Dorsolateral prefrontal cortex (tissue), 120 donors: ENCODE measurements at regions of chr20 and their contacts with region 1.

Region 1: GRCh38 chr20:51595058-51595532 is 52.6 kb upstream of the NFATC2 start:
- DNase-seq: peak; percentile 78 to 95 (median 89)
- H3K4me3 ChIP-seq: peak overlapping the region in 12 of 59 donors; percentile 5 to 30 (median 20)
- H3K27ac ChIP-seq: peak overlapping the region in 44 of 59 donors; percentile 1 to 75 (median 47)
- H3K27me3 ChIP-seq: no peaks in the 10 kb centered on the region
- CTCF ChIP-seq: peak; percentile 75 to 95 (median 89)

Region 2: DNA sequence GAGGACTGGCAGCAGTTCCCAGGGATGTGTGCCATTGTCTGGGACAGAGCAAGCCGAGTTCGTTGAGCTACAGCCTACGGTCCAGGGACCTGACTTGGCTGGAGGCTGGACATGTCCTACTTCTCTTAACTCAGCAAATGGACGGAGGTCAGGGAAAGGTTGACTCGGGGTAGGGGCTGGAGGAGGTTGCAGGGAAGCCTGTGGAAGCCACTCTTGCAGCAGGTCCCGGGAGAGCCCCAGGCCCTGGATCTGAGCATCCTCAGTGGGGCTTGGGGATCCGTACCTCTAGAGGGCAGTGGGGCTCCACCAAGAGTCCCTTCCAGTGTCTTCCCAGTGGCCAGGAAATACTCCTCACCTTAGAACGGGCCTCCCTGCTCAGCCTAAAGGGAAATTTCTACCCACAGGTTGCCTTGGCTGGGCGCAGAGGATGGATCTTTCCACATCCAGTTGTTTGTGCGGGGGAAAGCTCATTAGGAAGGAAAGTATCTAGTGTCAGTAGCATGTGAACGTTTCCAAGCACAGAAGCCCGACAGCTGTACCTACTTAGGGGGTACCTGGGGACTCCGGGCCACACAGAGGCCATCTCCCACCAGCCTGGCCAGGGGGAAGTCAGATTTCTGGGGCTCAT is 222.8 kb before region 1 on chr20:
- intact Hi-C with region 1: loop called (anchors 1 to 10 kb)
- DNase-seq: peak; percentile 34 to 76 (median 62)
- H3K4me3 ChIP-seq: no peak overlapping the region
- H3K27ac ChIP-seq: no peak overlapping the region
- H3K27me3 ChIP-seq: peaks cover 0 to 2% (median 0%) of the 10 kb centered on the region in 45 donors
- CTCF ChIP-seq: peak in 55 of 56 donors; percentile 42 to 84 (median 70)

Region 3: GRCh38 chr20:51828467-51829161 is 233.5 kb after region 1 on chr20:
- intact Hi-C with region 1: no loop called
- DNase-seq: no peak
- H3K4me3 ChIP-seq: no peak overlapping the region
- H3K27ac ChIP-seq: no peak overlapping the region
- H3K27me3 ChIP-seq: peaks cover 0 to 4% (median 0%) of the 10 kb centered on the region in 45 donors
- CTCF ChIP-seq: no peak